ENCODE measurements at regions of chr6 and their contacts with region 1.

Region 1: DNA sequence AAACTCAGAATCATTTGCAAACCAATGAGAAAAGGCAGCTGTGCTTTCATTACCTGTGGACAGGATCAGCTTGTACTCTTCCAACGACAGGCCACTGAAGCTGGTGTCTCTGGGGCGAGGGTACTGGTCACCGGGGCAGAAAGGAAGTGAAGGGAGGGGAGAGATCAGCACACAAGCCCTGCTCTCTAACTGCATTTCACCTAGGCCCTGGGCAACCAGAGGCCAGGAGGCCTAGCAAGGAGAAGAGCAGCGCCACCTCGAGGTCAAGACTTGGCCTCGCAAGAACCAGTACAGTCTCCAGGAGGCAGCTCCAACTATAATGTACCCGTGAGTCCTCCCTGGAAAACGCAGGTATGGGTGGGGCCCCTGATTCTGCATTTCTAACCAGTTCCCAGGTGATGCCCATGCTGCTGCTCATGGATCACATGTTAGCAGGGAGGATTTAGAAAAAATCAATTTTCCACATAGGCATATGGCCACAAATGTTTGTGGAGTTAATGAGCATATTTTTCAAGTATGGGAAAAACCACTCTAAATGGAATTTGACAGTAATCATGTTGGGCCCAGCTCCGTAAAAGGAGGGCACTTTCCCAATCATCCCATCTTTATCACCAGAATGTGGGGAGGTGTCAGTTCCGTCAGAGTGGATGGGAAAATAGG is 11.0 kb downstream of the UQCC2 start:
- DNase-seq: peak; percentile 87
- ATAC-seq: peak; percentile 76
- H3K4me3 Mint-ChIP-seq: no peak overlapping the region
- H3K27ac Mint-ChIP-seq: peak overlapping the region; percentile 40
- H3K4me1 Mint-ChIP-seq: peaks cover 49% of the 10 kb centered on the region
- H3K27me3 Mint-ChIP-seq: no peaks in the 10 kb centered on the region

Region 2: GRCh38 chr6:33592411-33593054 is 108.0 kb before region 1 on chr6:
- CTCF ChIA-PET with region 1: interaction called, 44 read pairs
- POLR2A ChIA-PET with region 1: no interaction called
- DNase-seq: peak; percentile 35
- ATAC-seq: peak; percentile 43
- H3K4me3 Mint-ChIP-seq: peak overlapping the region; percentile 66
- H3K27ac Mint-ChIP-seq: peak overlapping the region; percentile 1
- H3K4me1 Mint-ChIP-seq: peaks cover 31% of the 10 kb centered on the region
- H3K27me3 Mint-ChIP-seq: no peaks in the 10 kb centered on the region

Region 3: GRCh38 chr6:33683051-33683571 is 17.4 kb before region 1 on chr6:
- CTCF ChIA-PET with region 1: interaction called, 20 read pairs
- POLR2A ChIA-PET with region 1: interaction called, 3 read pairs
- DNase-seq: peak; percentile 63
- ATAC-seq: peak; percentile 65
- H3K4me3 Mint-ChIP-seq: no peak overlapping the region
- H3K27ac Mint-ChIP-seq: peak overlapping the region; percentile 80
- H3K4me1 Mint-ChIP-seq: peaks cover 23% of the 10 kb centered on the region
- H3K27me3 Mint-ChIP-seq: no peaks in the 10 kb centered on the region

Region 4: GRCh38 chr6:33740204-33740608 is 39.7 kb after region 1 on chr6:
- CTCF ChIA-PET with region 1: no interaction called
- POLR2A ChIA-PET with region 1: no interaction called
- DNase-seq: no peak
- ATAC-seq: no peak
- H3K4me3 Mint-ChIP-seq: no peak overlapping the region
- H3K27ac Mint-ChIP-seq: no peak overlapping the region
- H3K4me1 Mint-ChIP-seq: no peaks in the 10 kb centered on the region
- H3K27me3 Mint-ChIP-seq: peaks cover 13% of the 10 kb centered on the region

Measured in activated CD8-positive, alpha-beta T cell treated with anti-CD3 and anti-CD28 coated beads, Interleukin-2, amount 10 ng/mL, durations not matched to agents 7 days and 5 days (primary cell).